GM10248 (cell line): ENCODE measurements at regions of chr22 and their contacts with region 1.

Region 1: GRCh38 chr22:39319270-39320022 is at the start of gene RPL3:
- DNase-seq: peak; percentile 98
- CTCF ChIP-seq: no peak

Region 2: DNA sequence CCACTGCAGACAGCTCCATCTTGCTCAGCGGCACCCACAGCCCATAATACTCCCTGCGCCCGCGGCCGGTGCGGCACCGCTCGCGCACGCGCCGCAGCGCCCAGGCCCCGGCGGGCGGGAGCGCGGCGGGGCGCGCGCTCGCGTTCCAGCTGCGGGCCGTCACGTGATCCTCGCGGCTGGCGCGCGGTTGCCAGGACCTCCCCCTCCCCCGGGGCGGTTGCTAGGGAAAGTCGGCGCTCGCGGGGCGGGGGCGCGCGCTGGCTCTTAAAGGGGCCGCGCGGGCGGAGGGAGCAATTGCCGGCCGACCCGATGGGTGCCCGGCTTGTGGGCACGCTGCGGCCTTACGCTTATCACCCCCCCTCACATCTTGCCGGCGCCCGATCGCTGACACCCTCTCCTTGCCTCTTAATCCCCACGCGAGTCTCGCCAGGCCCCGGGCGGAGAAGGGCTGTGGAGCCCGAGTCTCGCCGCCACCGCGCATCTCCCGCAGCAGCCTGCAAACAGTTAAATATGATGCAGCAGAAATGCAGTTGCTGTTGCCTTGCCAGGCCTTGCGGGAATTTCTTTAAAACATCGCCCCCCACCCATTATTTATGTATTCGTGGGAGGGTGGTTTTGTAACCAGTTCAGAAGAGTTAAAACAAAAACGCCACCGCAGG is 447.1 kb before region 1 on chr22 and contains the start of gene CBX6:
- CTCF ChIA-PET with region 1: interaction called, 15 read pairs
- POLR2A ChIA-PET with region 1: interaction called, 3 read pairs
- DNase-seq: peak; percentile 95
- CTCF ChIP-seq: no peak

Region 3: DNA sequence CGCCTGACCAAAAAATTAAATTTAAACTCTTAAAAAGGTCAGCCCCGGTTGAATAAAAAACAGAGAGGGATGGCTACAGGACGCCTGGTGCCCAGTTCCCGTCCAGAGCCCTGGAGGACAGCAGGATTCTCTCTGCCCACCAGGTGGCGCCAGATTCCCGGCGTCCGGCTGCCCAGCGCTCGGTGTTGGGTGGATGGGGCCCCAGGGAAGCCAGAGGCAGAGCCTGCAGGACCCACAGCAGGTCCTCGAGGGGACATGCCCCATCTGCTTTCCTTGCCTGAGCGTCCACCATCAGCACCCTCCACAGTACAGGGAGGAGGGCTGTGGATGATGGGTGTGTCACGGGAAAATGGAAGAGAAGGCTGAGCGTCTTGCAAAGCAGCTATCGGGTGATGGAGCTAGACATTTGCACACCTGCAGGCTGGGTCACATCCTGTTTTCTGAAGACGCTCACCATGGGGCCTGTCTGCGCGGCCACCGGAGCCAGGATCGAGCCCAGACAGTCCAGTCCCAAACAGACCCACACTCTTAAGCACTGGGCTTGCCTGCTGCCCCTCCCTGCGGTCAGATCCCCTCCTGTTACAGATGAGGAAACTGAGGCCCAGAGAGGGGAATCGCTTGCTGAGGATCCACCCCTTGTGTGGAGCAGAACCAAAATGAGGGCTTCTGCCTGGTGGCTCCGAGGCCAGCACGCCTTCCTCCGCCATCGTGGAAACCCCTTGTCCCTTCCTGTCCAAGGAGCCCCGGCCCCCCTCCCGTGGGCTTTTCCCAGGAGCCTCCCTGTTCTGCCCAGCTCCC is 148.4 kb before region 1 on chr22:
- CTCF ChIA-PET with region 1: interaction called, 106 read pairs
- POLR2A ChIA-PET with region 1: interaction called, 17 read pairs
- DNase-seq: peak; percentile 86
- CTCF ChIP-seq: peak; percentile 98

Region 4: DNA sequence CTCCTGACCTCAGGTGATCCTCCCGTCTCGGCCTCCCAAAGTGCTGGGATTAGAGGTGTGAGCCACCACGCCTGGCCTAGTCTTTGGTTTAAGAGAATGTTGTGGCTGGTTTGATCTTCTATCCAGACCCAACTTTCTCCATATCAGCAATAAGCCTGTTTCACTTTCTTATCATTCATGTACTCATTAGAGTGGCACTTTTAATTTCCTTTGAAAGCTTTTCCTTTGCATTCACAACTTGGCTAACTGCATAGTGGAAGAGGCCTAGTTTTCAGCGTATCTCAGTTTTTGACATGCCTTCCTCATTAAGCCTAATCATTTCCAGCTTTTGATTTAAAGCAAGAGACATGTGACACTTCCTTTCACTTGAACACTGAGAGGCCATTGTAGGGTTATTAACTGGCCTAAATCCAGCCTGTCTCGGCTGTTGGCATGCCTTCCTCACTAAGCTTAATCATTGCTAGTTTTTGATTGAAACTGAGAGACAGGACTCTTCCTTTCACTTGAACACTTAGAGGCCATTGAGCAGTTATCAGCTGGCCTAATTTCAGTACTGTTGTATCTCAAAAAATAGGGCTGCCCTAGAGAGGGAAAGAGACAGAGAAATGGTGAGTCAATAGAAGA is 13.1 kb after region 1 on chr22:
- CTCF ChIA-PET with region 1: interaction called, 21 read pairs
- POLR2A ChIA-PET with region 1: interaction called, 21 read pairs
- DNase-seq: no peak
- CTCF ChIP-seq: no peak

Region 5: GRCh38 chr22:39514373-39514973 is 195.0 kb after region 1 on chr22:
- CTCF ChIA-PET with region 1: interaction called, 11 read pairs
- POLR2A ChIA-PET with region 1: interaction called, 8 read pairs
- DNase-seq: no peak
- CTCF ChIP-seq: peak; percentile 77